ENCODE measurements at regions of chr10 and their contacts with region 1.

Region 1: GRCh38 chr10:98467506-98468346 is 21.0 kb upstream of the HPS1 start:
- DNase-seq: peak; percentile 70
- ATAC-seq: peak; percentile 96

Region 2: GRCh38 chr10:98374217-98374980 is 93.3 kb before region 1 on chr10:
- intact Hi-C with region 1: no loop called
- DNase-seq: no peak
- ATAC-seq: peak in 1 of 2 donors; percentile 71

Region 3: DNA sequence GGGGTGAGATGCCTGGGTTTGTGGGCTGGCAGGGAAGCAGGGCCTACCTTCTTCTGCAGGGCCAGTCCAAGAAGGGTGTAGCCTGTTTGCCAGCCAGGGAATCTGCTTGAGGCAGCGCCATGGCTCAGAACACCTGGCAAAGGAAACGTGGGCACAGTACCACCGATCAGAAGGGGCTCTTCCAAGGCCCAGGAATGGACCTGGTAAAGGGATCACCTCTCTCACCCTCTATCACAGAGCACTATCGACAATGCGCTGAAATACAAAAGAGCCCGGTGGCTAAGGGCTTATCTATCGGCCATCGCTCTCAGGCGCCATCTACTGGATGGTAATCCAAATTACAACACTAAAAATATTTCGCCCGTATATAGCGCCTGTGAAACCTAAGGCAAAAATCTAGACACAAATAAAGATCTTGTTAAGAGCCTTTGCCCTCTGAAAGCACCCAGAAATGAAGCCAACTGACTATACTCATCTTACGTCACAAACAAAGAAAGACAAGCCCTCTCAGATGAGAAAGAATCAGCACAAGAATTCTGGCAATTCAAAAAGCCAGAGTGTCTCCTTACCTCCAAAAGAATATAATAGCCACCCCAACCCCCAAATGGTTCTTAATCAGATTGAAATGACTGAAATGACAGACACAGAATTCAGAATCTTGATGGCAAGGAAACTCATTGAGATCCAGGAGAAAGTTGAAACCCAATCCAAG is 196.8 kb after region 1 on chr10:
- intact Hi-C with region 1: loop called in 1 of 2 experiments (anchors 5 kb)
- DNase-seq: no peak
- ATAC-seq: no peak

Region 4: DNA sequence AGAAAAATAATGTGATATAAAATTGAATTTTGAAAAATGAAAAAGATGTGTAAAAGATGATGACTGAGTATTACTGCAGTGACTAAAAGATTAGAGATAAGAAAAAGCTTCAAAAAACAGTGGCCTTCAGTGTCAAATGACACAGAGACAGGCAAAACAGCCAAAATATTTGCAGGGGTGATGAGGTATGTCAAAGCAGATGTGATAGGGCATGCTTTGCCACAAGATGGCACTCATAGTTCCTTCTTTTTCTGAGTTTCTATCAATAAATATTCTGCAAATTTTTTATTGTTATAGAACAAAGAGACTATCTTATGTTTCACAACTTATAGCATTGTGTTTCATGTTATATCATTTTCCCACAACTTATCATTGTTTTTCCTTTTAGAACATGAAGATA is 323.1 kb after region 1 on chr10:
- intact Hi-C with region 1: no loop called
- DNase-seq: no peak
- ATAC-seq: no peak

Region 5: GRCh38 chr10:99248824-99249223 is 781.1 kb after region 1 on chr10:
- intact Hi-C with region 1: loop called (anchors 2 to 5 kb)
- DNase-seq: no peak
- ATAC-seq: no peak

Region 6: GRCh38 chr10:99364125-99364524 is 896.4 kb after region 1 on chr10:
- intact Hi-C with region 1: loop called in 1 of 2 experiments (anchors 10 kb)
- DNase-seq: no peak
- ATAC-seq: no peak

Region 7: GRCh38 chr10:99430451-99431189 is 962.9 kb after region 1 on chr10 and contains the start of gene GOT1:
- intact Hi-C with region 1: loop called in 1 of 2 experiments (anchors 10 kb)
- DNase-seq: peak; percentile 96
- ATAC-seq: peak; percentile 97 to 99
- total RNA-seq, gene GOT1: 404 to 437 TPM

Region 8: DNA sequence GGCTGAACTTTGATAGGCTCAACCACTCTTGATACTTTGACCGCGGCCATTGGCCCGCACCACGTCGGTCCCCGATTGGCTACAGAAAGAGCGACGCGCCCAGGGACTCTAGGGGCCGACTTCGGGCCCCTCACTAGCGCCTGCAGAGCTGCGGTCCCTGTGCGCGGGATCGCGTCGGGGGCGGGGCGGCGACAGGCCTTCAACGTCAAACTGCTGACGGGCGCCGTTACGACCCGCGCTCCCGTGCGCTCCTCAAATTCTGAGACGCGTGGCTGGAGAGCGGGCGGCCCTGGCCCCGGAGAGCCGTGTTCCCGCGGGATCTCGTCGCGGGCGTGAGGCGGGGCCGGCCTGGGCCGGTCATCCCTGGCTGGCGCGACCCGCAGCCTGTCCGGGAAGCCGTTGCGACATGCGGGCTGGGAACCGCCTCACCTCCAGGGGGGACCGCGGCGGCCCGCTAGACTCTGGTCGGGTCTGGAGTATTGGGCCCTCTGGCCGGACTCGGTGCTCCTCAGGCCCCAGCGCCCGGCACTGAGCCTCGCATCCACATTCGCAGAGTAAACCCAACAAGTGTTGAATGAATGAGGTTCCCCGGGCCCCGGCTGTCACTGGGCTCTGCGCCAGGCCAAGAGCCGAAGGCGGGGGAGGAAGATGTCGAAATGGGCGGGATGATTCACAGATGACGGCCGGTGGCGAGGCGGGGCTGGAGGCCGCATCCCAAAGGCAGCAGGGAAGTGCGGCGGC is 1153.2 kb after region 1 on chr10:
- intact Hi-C with region 1: loop called in 1 of 2 experiments (anchors 10 kb)
- DNase-seq: peak; percentile 96
- ATAC-seq: peak; percentile 93 to 95

Measured in left cardiac atrium (tissue), 4 donors.